Sciatic nerve (tissue), 2 donors: ENCODE measurements at regions of chr3 and their contacts with region 1.

Region 1: GRCh38 chr3:69462022-69462825 is 76.3 kb upstream of the FRMD4B start:
- DNase-seq: no peak
- ATAC-seq: no peak

Region 2: GRCh38 chr3:68033867-68034266 is 1428.4 kb before region 1 on chr3:
- intact Hi-C with region 1: loop called (anchors 5 kb)
- DNase-seq: no peak
- ATAC-seq: no peak